CD8-positive, alpha-beta T cell (primary cell): ENCODE measurements at regions of chr17 and their contacts with region 1.

Region 1: GRCh38 chr17:66255112-66255511 is 25.9 kb upstream of the APOH start:
- DNase-seq: peak in 7 of 9 experiments; percentile 13 to 87 (median 35)
- ATAC-seq: peak; percentile 91
- H3K4me3 ChIP-seq: no peak overlapping the region
- H3K4me3 Mint-ChIP-seq: peak overlapping the region; percentile 59
- H3K27ac ChIP-seq: no peak overlapping the region
- H3K27ac Mint-ChIP-seq: peak overlapping the region; percentile 70
- H3K4me1 ChIP-seq: peaks cover 13% of the 10 kb centered on the region
- H3K4me1 Mint-ChIP-seq: peaks cover 21% of the 10 kb centered on the region
- H3K27me3 ChIP-seq: no peaks in the 10 kb centered on the region
- H3K27me3 Mint-ChIP-seq: no peaks in the 10 kb centered on the region
- CTCF ChIP-seq: peak; percentile 77

Region 2: DNA sequence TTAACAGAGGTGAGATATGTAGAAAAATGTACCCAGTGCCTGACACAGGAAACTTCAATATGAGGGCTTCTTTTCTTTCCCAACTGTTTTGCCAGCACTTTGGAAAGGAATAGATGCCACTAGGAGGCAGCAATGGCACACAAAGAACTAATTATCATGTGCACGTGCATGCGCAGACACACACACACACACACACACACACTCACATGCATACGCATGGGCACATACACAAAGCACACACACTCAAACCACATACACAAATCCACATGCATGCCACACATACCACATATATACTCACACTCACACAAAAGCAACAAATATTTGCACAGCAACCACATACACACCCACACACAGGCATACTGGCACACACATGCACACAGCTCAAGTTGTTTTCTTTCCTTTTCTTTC is 54.4 kb before region 1 on chr17:
- CTCF ChIA-PET with region 1: interaction called, 7 read pairs
- POLR2A ChIA-PET with region 1: no interaction called
- intact Hi-C with region 1: loop called in 1 of 2 experiments (anchors 1 kb)
- DNase-seq: peak in 8 of 9 experiments; percentile 3 to 74 (median 28)
- ATAC-seq: peak; percentile 42
- H3K4me3 ChIP-seq: no peak overlapping the region
- H3K4me3 Mint-ChIP-seq: no peak overlapping the region
- H3K27ac ChIP-seq: no peak overlapping the region
- H3K27ac Mint-ChIP-seq: no peak overlapping the region
- H3K4me1 ChIP-seq: peaks cover 18% of the 10 kb centered on the region
- H3K4me1 Mint-ChIP-seq: peaks cover 19% of the 10 kb centered on the region
- H3K27me3 ChIP-seq: no peaks in the 10 kb centered on the region
- H3K27me3 Mint-ChIP-seq: no peaks in the 10 kb centered on the region
- CTCF ChIP-seq: peak; percentile 33

Region 3: DNA sequence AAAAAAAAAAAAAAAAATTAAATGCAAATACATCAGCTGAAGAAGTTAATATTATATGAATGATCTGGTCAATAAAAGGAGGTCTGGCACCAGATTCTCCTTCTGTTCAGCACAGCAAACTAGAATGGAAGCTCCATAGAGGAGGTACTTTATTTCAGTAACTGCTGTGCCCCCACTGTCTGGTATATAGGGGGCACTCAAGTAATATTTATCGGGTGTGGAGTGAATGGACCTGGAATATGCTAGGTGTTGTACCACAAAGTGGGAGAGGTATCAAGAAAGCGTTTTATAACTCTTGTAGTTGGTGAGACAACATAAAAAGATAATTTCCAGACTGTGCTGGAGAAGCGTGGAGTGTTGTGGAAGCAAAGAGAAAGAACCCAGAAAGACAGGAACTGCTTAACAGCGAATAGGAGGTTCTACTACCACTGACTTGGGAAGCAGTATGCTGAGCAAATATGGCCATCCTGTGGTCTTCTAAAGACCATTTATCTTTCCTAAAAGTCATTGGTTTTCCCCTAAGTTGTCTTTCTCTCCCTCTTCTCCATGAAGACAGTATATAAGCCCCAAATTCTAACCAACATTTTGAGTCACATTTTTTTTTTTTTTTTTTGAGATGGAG is 35.1 kb after region 1 on chr17:
- CTCF ChIA-PET with region 1: interaction called, 3 read pairs
- POLR2A ChIA-PET with region 1: interaction called, 3 read pairs
- intact Hi-C with region 1: loop called in 1 of 2 experiments (anchors 1 kb)
- DNase-seq: peak in 2 of 9 experiments; percentile 24 to 51
- ATAC-seq: peak; percentile 48
- H3K4me3 ChIP-seq: no peak overlapping the region
- H3K4me3 Mint-ChIP-seq: no peak overlapping the region
- H3K27ac ChIP-seq: no peak overlapping the region
- H3K27ac Mint-ChIP-seq: no peak overlapping the region
- H3K4me1 ChIP-seq: peaks cover 24% of the 10 kb centered on the region
- H3K4me1 Mint-ChIP-seq: peaks cover 36% of the 10 kb centered on the region
- H3K27me3 ChIP-seq: no peaks in the 10 kb centered on the region
- H3K27me3 Mint-ChIP-seq: no peaks in the 10 kb centered on the region
- CTCF ChIP-seq: no peak

Region 4: DNA sequence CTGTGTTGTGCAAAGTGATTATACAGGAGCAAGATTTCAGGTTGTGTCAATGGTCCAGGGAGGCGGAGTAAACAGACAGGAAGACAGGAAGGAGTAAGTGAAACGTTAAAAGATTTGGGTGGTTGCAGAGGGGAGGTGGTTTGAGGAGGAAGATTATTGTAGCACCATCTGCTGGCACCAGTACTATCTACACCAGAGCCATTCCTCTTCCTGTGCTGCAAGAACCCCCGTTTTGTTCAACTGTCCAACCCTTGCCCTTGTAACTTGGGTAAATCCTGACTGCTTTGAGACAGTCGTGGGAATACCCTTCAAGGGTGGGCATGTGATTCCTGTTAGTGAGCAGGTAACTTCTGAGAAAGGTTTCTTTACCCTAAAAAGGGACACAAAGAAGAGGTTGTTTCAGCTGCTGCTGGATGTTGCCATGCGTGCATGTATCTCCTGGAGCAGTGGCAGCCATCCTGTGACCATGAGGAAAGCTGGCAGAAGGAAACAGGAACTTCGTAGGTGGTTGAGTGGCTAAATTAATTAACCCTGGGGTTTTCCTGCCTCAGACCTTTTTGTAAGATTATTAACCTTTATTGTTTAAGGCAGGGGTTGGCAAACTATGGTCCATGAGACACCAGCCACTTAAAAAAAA is 171.4 kb after region 1 on chr17:
- CTCF ChIA-PET with region 1: interaction called, 5 read pairs
- POLR2A ChIA-PET with region 1: no interaction called
- intact Hi-C with region 1: loop called (anchors 1 kb)
- DNase-seq: peak; percentile 14 to 81 (median 49)
- ATAC-seq: peak; percentile 98
- H3K4me3 ChIP-seq: no peak overlapping the region
- H3K4me3 Mint-ChIP-seq: peak overlapping the region; percentile 48
- H3K27ac ChIP-seq: no peak overlapping the region
- H3K27ac Mint-ChIP-seq: peak overlapping the region; percentile 82
- H3K4me1 ChIP-seq: peaks cover 19% of the 10 kb centered on the region
- H3K4me1 Mint-ChIP-seq: peaks cover 64% of the 10 kb centered on the region
- H3K27me3 ChIP-seq: no peaks in the 10 kb centered on the region
- H3K27me3 Mint-ChIP-seq: no peaks in the 10 kb centered on the region
- CTCF ChIP-seq: peak; percentile 48

Region 5: GRCh38 chr17:66625311-66625775 is 370.2 kb after region 1 on chr17:
- CTCF ChIA-PET with region 1: no interaction called
- POLR2A ChIA-PET with region 1: no interaction called
- intact Hi-C with region 1: loop called in 1 of 2 experiments (anchors 2 kb)
- DNase-seq: peak in 1 of 9 experiments; percentile 11
- ATAC-seq: no peak
- H3K4me3 ChIP-seq: no peak overlapping the region
- H3K4me3 Mint-ChIP-seq: no peak overlapping the region
- H3K27ac ChIP-seq: no peak overlapping the region
- H3K27ac Mint-ChIP-seq: no peak overlapping the region
- H3K4me1 ChIP-seq: no peaks in the 10 kb centered on the region
- H3K4me1 Mint-ChIP-seq: peaks cover 23% of the 10 kb centered on the region
- H3K27me3 ChIP-seq: no peaks in the 10 kb centered on the region
- H3K27me3 Mint-ChIP-seq: no peaks in the 10 kb centered on the region
- CTCF ChIP-seq: no peak

Region 6: GRCh38 chr17:66673668-66674315 is 418.7 kb after region 1 on chr17:
- CTCF ChIA-PET with region 1: no interaction called
- POLR2A ChIA-PET with region 1: interaction called, 4 read pairs
- intact Hi-C with region 1: loop called (anchors 1 to 2 kb)
- DNase-seq: peak; percentile 6 to 87 (median 57)
- ATAC-seq: peak; percentile 86
- H3K4me3 ChIP-seq: no peak overlapping the region
- H3K4me3 Mint-ChIP-seq: peak overlapping the region; percentile 23
- H3K27ac ChIP-seq: peak overlapping the region in 1 of 2 experiments; percentile 45
- H3K27ac Mint-ChIP-seq: peak overlapping the region; percentile 91
- H3K4me1 ChIP-seq: peaks cover 23% of the 10 kb centered on the region
- H3K4me1 Mint-ChIP-seq: peaks cover 56% of the 10 kb centered on the region
- H3K27me3 ChIP-seq: no peaks in the 10 kb centered on the region
- H3K27me3 Mint-ChIP-seq: no peaks in the 10 kb centered on the region
- CTCF ChIP-seq: peak; percentile 56

Region 7: GRCh38 chr17:66906321-66907278 is 651.5 kb after region 1 on chr17:
- CTCF ChIA-PET with region 1: no interaction called
- POLR2A ChIA-PET with region 1: no interaction called
- intact Hi-C with region 1: loop called in 1 of 2 experiments (anchors 5 kb)
- DNase-seq: peak; percentile 27 to 79 (median 58)
- ATAC-seq: peak; percentile 48
- H3K4me3 ChIP-seq: no peak overlapping the region
- H3K4me3 Mint-ChIP-seq: no peak overlapping the region
- H3K27ac ChIP-seq: no peak overlapping the region
- H3K27ac Mint-ChIP-seq: no peak overlapping the region
- H3K4me1 ChIP-seq: no peaks in the 10 kb centered on the region
- H3K4me1 Mint-ChIP-seq: peaks cover 5% of the 10 kb centered on the region
- H3K27me3 ChIP-seq: no peaks in the 10 kb centered on the region
- H3K27me3 Mint-ChIP-seq: peaks cover 4% of the 10 kb centered on the region
- CTCF ChIP-seq: peak; percentile 67